ENCODE measurements at regions of chr6 and their contacts with region 1.

Region 1: DNA sequence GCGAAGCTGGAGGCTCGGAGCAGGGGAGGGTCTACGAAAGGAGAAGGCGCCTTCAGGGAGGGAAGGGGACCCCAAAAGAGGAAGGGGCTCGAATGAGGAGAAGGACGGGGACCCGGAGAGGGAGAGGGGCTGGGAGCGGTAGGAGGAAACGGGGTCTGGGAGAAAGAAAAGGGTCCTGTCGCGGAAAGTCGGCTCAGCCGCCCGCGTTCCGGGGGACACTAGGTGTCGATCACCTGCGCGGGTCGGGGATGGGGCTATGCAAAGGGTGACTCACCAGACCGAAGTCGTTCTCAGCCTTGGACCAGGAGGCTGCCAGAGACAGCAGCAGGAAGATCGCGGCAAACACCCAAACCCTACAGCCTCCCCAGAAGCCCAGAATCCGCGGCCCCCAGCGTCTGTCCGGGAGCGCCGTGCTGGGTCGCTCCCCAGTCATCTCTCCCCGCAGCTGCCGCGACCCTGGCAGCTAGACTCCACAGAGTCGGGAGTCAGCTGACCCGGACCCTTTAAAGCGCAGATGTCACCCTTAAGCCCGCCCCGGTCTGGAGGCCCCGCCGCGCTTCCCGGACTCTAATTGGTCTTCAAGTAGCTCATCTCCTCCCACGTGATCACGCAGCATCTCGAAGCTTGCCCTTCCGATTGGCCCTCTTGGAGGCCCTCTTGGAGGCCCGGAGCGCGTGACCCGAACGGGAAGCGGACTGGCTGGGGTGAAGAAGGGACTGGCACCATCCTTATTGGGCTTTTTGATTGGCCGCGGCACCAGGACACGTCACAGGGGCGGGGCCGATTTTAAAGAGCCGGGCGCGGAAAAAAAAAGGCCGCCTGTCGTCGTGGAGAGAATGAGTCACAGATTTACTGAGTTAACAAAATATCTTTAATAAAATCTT is at the start of gene NEU1:
- DNase-seq: peak; percentile 100
- total RNA-seq, gene NEU1: 19.4 TPM

Region 2: GRCh38 chr6:31834434-31835198 is 28.0 kb before region 1 on chr6:
- intact Hi-C with region 1: loop called (anchors 2 kb)
- DNase-seq: peak; percentile 93

Region 3: DNA sequence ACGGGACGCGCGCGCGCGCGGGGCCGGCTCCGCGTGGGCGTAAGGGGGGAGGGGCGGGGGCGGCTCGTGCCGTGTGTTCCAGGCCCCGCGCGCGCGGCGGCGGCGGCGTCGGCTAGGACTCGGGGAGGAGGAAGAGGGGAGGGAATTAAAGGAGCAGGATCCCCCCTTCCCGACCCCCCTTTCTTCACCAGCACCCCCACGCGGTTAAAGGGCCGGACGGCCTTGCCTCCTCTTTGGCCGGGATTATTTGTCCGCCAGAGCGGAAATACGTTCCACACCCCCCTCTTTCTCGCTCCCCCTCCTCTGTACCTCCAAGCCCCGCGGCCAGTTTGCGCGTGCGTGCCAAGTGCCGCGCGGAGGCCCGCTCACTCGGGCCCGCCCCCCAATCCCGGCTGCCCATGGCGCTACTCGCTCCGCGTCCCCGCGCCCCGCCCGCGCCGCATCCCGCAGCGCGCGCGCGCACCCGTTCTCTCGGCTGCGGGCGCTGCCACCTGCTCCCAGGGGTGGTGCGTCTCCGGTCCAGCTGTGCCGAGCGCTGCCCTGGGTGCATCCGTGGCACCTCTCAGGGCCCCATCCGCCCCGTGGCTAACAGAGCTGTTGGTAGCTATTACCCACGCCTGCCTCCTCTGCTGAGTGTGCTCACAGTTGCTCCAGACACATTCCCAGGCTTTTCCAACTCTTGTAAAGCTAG is 39.5 kb after region 1 on chr6 and contains the start of gene ZBTB12:
- intact Hi-C with region 1: loop called (anchors 2 kb)
- DNase-seq: peak; percentile 94
- total RNA-seq, gene ZBTB12: 5.2 TPM

Region 4: DNA sequence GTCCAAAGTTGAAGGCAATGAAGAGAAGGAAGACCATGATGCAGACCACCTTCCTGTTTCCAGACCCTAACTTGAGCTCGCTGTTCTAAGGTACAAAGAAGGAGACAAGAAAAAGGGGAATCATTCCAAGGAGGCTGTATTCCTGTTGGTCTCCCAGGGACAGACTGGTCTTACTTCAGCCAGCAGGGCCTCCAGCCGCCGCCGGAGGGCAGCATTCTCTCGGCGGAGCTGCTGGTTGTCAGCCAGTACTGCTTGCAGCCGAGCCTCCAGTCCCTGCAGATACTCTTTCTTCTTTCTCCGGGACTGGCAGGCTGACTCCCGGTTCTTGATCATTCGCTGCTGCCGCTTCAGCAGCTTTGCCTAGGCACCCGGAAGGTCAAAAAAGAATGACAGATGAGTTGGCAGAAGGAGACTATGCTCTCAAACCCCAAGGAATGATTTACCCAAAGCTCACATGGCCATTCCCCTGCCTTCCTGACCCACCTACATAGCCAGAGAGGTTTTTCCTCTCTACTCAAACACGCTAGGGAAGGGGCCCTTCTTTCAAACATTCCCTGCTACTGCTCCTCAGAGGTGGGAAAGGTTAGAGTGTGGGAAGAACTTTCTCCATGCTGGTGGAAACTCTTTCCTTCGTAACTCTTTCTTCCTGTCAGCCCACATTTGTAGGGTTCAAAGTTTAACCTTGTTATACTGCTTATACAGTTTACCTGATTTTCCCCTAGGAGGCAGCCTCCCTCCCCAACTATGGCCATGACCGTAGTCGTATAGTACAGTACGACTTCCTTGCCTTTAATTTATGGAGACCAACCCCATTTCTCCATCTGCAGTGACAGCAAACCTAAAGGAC is 256.4 kb after region 1 on chr6:
- intact Hi-C with region 1: no loop called
- DNase-seq: peak; percentile 94

Measured in cardiac septum (tissue), 1 donor.